ENCODE measurements at regions of chr15 and their contacts with region 1.

Region 1: DNA sequence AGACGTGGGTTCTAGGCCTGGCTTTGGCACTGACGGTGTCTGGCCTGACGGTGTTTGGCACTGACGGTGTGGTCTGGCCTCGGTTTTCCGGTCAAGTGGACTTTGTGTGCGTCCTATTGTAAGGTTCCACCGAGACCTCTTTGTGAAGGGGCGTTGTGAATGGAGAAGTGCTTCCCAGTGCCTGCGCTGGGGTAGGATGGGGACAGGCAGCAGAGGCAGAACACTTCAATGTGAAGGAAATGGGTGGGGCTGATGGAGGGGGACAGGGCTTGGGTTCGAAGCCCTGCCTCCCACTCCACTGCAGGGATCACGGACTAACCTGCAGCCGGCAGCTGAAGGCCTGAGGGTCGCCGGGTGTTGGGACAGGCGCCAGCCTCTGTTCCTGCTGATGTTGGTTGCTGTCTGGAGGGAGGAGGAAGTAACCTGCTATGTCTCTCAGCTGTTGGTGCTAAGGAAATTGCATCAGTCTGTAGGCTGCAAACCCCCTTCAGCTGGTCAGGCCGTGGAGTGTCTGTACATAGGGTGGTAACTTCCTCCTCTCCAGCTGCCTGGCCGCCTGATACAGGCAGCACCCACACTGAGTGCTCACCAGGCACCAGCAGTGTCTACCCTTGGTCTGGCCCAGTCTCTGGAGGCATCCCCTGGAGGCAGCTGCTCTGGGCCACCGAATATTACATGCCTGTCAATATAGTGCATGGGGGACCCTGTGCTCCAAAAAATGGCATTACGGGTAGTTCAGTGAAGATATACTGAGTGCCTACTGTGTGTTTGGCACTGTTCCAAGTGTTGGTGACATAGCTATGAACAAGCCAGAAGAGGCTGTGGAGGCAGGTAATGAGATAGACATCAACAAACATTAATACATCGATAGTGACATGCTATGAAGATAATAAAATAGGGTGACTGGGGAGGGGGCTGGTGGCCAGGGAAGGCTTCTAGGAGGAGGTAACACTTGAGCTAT is 1.1 kb downstream of the TM6SF1 start:
- DNase-seq: peak; percentile 43 to 51
- ATAC-seq: peak; percentile 61 to 85 (median 76)
- H3K4me3 ChIP-seq: peak overlapping the region in 9 of 10 donors; percentile 47 to 74 (median 64)
- H3K27ac ChIP-seq: peak overlapping the region; percentile 41 to 90 (median 73)
- H3K4me1 ChIP-seq: peaks cover 0 to 59% (median 36%) of the 10 kb centered on the region in 9 donors
- H3K27me3 ChIP-seq: peaks cover 0 to 29% (median 9%) of the 10 kb centered on the region in 7 donors
- CTCF ChIP-seq: no peak

Region 2: GRCh38 chr15:83207622-83208411 is 99.3 kb after region 1 on chr15 and contains the start of gene HDGFL3:
- intact Hi-C with region 1: loop called in 1 of 10 experiments (anchors 1 kb)
- DNase-seq: peak; percentile 62 to 79
- ATAC-seq: peak; percentile 46 to 73 (median 58)
- H3K4me3 ChIP-seq: peak within 1 kb of the TSS; percentile 68 to 96 (median 92)
- H3K27ac ChIP-seq: peak within 1 kb of the TSS; percentile 80 to 96 (median 92)
- H3K4me1 ChIP-seq: peaks cover 2 to 44% (median 17%) of the 10 kb centered on the region in 9 donors
- H3K27me3 ChIP-seq: peaks cover 0 to 36% (median 0%) of the 10 kb centered on the region in 7 donors
- CTCF ChIP-seq: peak in 2 of 9 donors; percentile 8 to 35
- total RNA-seq, gene HDGFL3: 25.5 to 43.2 (median 39.0) TPM

Measured in heart right ventricle (tissue), 16 donors.